ENCODE measurements at regions of chr11 and their contacts with region 1.

Region 1: GRCh38 chr11:34068111-34068510 is 16.6 kb downstream of the CAPRIN1 start:
- DNase-seq: no peak
- ATAC-seq: no peak
- H3K4me3 Mint-ChIP-seq: no peak overlapping the region
- H3K27ac Mint-ChIP-seq: peak overlapping the region; percentile 14
- H3K4me1 Mint-ChIP-seq: peaks cover 57% of the 10 kb centered on the region
- H3K27me3 Mint-ChIP-seq: no peaks in the 10 kb centered on the region

Region 2: DNA sequence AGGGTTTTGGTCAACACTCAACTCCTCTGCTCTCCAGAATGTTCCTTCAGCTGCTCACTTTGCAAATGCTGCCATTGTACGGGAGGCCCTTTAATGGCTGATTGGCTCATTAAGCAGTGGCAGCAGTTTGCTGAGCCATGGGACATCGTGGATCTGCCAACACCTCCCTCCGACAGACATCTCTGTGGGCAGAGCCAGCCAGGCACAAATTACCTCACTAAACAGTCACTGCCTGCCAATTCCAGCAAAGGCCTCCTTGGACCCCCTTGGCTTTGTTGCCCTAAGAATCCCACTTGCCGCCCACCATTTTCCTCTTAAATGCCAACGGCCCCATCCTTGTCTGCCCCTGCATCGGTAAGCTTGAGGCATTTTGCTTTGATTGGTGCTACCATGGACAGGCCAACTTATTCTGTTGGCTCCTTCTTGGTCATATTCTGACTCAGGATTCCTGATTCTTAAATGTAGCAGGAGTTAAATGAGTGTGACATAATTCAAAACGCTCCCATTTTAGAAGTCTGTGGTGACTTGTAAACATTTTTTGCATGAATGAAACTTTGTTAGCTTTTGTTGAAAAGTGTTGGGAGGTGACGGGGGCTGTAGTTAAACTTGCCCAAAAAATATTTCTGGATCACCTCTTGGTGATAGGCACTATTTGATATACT is 118.7 kb before region 1 on chr11:
- CTCF ChIA-PET with region 1: no interaction called
- DNase-seq: no peak
- ATAC-seq: no peak
- H3K4me3 Mint-ChIP-seq: no peak overlapping the region
- H3K27ac Mint-ChIP-seq: no peak overlapping the region
- H3K4me1 Mint-ChIP-seq: no peaks in the 10 kb centered on the region
- H3K27me3 Mint-ChIP-seq: peaks cover 16% of the 10 kb centered on the region

Region 3: DNA sequence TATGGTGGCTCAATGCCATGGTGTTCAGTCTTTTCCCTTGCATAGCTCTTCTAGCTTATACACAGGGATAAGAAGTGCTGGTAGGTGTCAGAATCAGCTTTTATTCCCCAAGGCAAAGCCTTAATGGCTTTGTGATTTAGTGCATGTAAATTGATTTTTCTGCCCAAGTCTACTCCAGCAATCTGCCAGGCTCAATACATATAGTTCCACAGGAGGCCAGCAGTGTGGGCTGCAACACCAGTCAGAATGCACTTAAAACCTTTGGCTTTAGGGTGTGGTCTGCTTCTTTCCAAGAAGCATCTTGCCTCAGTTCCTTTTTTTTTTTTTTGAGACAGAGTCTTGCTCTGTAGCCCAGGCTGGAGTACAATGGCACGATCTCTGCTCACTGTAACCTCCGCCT is 31.1 kb before region 1 on chr11:
- CTCF ChIA-PET with region 1: no interaction called
- DNase-seq: no peak
- ATAC-seq: no peak
- H3K4me3 Mint-ChIP-seq: no peak overlapping the region
- H3K27ac Mint-ChIP-seq: no peak overlapping the region
- H3K4me1 Mint-ChIP-seq: no peaks in the 10 kb centered on the region
- H3K27me3 Mint-ChIP-seq: no peaks in the 10 kb centered on the region

Region 4: GRCh38 chr11:34056672-34057071 is 11.4 kb before region 1 on chr11:
- CTCF ChIA-PET with region 1: interaction called, 12 read pairs
- DNase-seq: no peak
- ATAC-seq: no peak
- H3K4me3 Mint-ChIP-seq: no peak overlapping the region
- H3K27ac Mint-ChIP-seq: no peak overlapping the region
- H3K4me1 Mint-ChIP-seq: peaks cover 44% of the 10 kb centered on the region
- H3K27me3 Mint-ChIP-seq: no peaks in the 10 kb centered on the region

Region 5: GRCh38 chr11:34114471-34114870 is 46.4 kb after region 1 on chr11:
- CTCF ChIA-PET with region 1: no interaction called
- DNase-seq: no peak
- ATAC-seq: no peak
- H3K4me3 Mint-ChIP-seq: no peak overlapping the region
- H3K27ac Mint-ChIP-seq: peak overlapping the region; percentile 70
- H3K4me1 Mint-ChIP-seq: peaks cover 5% of the 10 kb centered on the region
- H3K27me3 Mint-ChIP-seq: no peaks in the 10 kb centered on the region